HepG2 (cell line): ENCODE measurements at regions of chr19 and their contacts with region 1.

Region 1: GRCh38 chr19:3700221-3701032 is at the start of gene PIP5K1C:
- DNase-seq: peak; percentile 64
- ATAC-seq: peak; percentile 73
- H3K4me3 ChIP-seq: peak within 1 kb of the TSS; percentile 81 to 93 (median 89)
- H3K27ac ChIP-seq: peak within 1 kb of the TSS; percentile 18
- H3K4me1 ChIP-seq: peaks cover 15% of the 10 kb centered on the region
- H3K27me3 ChIP-seq: no peaks in the 10 kb centered on the region; a peak in 1 of 5 replicates
- CTCF ChIP-seq: peak; percentile 82
- EP300 ChIP-seq: no peak
- POLR2A ChIP-seq: peak in 1 of 2 experiments; percentile 44; a peak in 1 of 4 replicates
- RAD21 ChIP-seq: peak; percentile 81
- total RNA-seq, gene PIP5K1C: 4.3 and 5.2 TPM in 2 replicates

Region 2: GRCh38 chr19:3665681-3666544 is 34.5 kb before region 1 on chr19:
- CTCF ChIA-PET with region 1: interaction called, 16 read pairs
- POLR2A ChIA-PET with region 1: no interaction called
- in situ Hi-C with region 1: loop called (anchors 5 kb)
- intact Hi-C with region 1: loop called (anchors 5 kb)
- DNase-seq: peak; percentile 13
- ATAC-seq: peak; percentile 64
- H3K4me3 ChIP-seq: no peak overlapping the region
- H3K27ac ChIP-seq: no peak overlapping the region
- H3K4me1 ChIP-seq: peaks cover 21% of the 10 kb centered on the region
- H3K27me3 ChIP-seq: no peaks in the 10 kb centered on the region
- CTCF ChIP-seq: peak; percentile 97
- EP300 ChIP-seq: no peak
- POLR2A ChIP-seq: no peak
- RAD21 ChIP-seq: peak; percentile 93

Region 3: GRCh38 chr19:3679144-3679980 is 21.1 kb before region 1 on chr19:
- CTCF ChIA-PET with region 1: no interaction called
- POLR2A ChIA-PET with region 1: no interaction called
- in situ Hi-C with region 1: no loop called
- intact Hi-C with region 1: no loop called
- DNase-seq: no peak
- ATAC-seq: no peak
- H3K4me3 ChIP-seq: no peak overlapping the region
- H3K27ac ChIP-seq: no peak overlapping the region
- H3K4me1 ChIP-seq: no peaks in the 10 kb centered on the region
- H3K27me3 ChIP-seq: no peaks in the 10 kb centered on the region
- CTCF ChIP-seq: no peak
- EP300 ChIP-seq: no peak
- POLR2A ChIP-seq: no peak
- RAD21 ChIP-seq: no peak